ENCODE measurements at regions of chr16 and their contacts with region 1.

Region 1: GRCh38 chr16:56988948-56989945 is at the start of gene NLRC5:
- DNase-seq: peak; percentile 72 to 93 (median 88)
- ATAC-seq: peak; percentile 95
- H3K4me3 ChIP-seq: peak within 1 kb of the TSS; percentile 73
- H3K4me3 Mint-ChIP-seq: peak within 1 kb of the TSS; percentile 93 to 100 (median 98)
- H3K27ac ChIP-seq: peak within 1 kb of the TSS; percentile 98
- H3K27ac Mint-ChIP-seq: peak within 1 kb of the TSS; percentile 85 to 99 (median 97)
- H3K4me1 ChIP-seq: peaks cover 24 to 51% of the 10 kb centered on the region in 2 donors
- H3K4me1 Mint-ChIP-seq: peaks cover 65 to 87% (median 73%) of the 10 kb centered on the region in 7 donors
- H3K27me3 ChIP-seq: no peaks in the 10 kb centered on the region
- H3K27me3 Mint-ChIP-seq: no peaks in the 10 kb centered on the region
- total RNA-seq, gene NLRC5: 380 to 615 (median 394) TPM

Region 2: DNA sequence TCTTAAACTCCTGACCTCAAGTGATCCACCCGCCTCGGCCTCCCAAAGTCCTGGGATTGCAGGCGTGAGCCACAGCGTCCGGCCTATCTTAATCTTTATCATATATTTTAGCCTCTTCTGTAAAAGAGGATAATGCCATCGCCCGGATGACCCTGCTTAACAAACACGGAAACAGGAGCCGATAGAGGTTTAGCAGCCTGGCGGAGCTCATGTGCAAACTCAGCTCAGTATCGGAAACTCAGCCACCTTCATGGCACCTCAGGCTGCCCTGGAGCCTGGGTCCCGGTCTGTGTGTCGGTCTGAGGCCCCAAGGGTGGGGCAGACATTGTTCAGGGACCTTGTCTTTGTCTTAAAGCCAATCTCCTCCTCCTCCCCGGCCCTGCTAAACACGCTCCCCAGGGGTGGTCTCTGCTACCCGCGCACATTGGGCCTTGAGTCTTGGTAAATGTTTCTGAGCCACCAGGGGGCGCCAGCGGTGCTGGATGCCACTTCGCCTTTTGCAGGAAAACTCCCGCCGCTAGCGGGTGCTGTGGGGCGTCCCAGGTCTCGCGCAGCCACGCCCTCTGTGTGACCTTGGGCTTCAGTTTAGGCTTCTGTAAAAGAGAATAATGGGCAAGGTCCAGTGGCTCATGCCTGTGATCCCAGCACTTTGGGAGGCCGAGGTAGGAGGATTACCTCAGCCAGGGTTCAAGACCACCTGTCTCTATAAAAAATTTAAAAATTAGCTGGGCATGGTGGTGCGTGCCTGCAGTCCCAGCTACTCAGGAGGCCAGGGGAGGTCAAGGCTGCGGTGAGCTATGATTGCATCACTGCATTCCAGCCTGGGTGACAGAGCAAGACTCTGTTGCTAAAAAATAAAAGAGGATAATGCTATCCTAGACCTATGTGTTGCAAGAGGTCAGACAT is 24.8 kb before region 1 on chr16:
- CTCF ChIA-PET with region 1: interaction called, 8 read pairs
- POLR2A ChIA-PET with region 1: interaction called, 27 read pairs
- intact Hi-C with region 1: loop called (anchors 1 kb)
- DNase-seq: peak; percentile 84 to 96 (median 91)
- ATAC-seq: peak; percentile 99
- H3K4me3 ChIP-seq: no peak overlapping the region
- H3K4me3 Mint-ChIP-seq: peak overlapping the region in 4 of 10 donors; percentile 6 to 62 (median 38)
- H3K27ac ChIP-seq: no peak overlapping the region
- H3K27ac Mint-ChIP-seq: peak overlapping the region in 8 of 9 donors; percentile 60 to 91 (median 82)
- H3K4me1 ChIP-seq: peaks cover 7 to 19% of the 10 kb centered on the region in 2 donors
- H3K4me1 Mint-ChIP-seq: peaks cover 21 to 27% (median 23%) of the 10 kb centered on the region in 7 donors
- H3K27me3 ChIP-seq: no peaks in the 10 kb centered on the region
- H3K27me3 Mint-ChIP-seq: peaks cover 0 to 4% (median 0%) of the 10 kb centered on the region in 5 donors

Region 3: GRCh38 chr16:56977216-56977615 is 12.0 kb before region 1 on chr16:
- CTCF ChIA-PET with region 1: interaction called, 5 read pairs
- POLR2A ChIA-PET with region 1: interaction called, 88 read pairs
- intact Hi-C with region 1: no loop called
- DNase-seq: no peak
- ATAC-seq: no peak
- H3K4me3 ChIP-seq: no peak overlapping the region
- H3K4me3 Mint-ChIP-seq: peak overlapping the region in 1 of 10 donors; percentile 42
- H3K27ac ChIP-seq: no peak overlapping the region
- H3K27ac Mint-ChIP-seq: peak overlapping the region in 4 of 9 donors; percentile 15 to 86 (median 74)
- H3K4me1 ChIP-seq: peaks cover 14 to 16% of the 10 kb centered on the region in 2 donors
- H3K4me1 Mint-ChIP-seq: peaks cover 32 to 66% (median 59%) of the 10 kb centered on the region in 7 donors
- H3K27me3 ChIP-seq: no peaks in the 10 kb centered on the region
- H3K27me3 Mint-ChIP-seq: no peaks in the 10 kb centered on the region

Region 4: DNA sequence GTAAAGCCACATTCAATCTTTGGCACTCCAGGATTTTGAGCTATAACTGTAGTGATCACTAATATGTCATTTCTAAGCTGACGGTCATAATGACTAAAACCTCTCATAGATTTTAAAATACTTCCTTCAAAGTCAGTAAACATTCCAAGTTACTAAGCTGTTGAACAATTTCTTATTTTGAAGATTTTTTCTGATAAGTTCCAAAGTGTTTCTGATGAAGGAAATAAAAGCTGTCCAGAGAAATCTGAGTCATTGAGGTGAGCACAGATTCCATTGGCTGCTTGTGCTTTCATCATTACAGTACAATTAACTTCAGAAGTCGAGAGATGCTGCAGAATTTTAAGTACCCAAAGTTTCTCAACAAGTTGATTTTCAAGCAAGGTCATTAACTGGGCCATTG is 24.0 kb after region 1 on chr16:
- CTCF ChIA-PET with region 1: interaction called, 3 read pairs
- POLR2A ChIA-PET with region 1: interaction called, 182 read pairs
- intact Hi-C with region 1: loop called (anchors 1 kb)
- DNase-seq: no peak
- ATAC-seq: no peak
- H3K4me3 ChIP-seq: peak overlapping the region; percentile 24
- H3K4me3 Mint-ChIP-seq: peak overlapping the region in 9 of 10 donors; percentile 36 to 87 (median 72)
- H3K27ac ChIP-seq: peak overlapping the region; percentile 80
- H3K27ac Mint-ChIP-seq: peak overlapping the region; percentile 88 to 98 (median 94)
- H3K4me1 ChIP-seq: peaks cover 81 to 83% of the 10 kb centered on the region in 2 donors
- H3K4me1 Mint-ChIP-seq: peaks cover 53 to 94% (median 82%) of the 10 kb centered on the region in 7 donors
- H3K27me3 ChIP-seq: no peaks in the 10 kb centered on the region
- H3K27me3 Mint-ChIP-seq: no peaks in the 10 kb centered on the region

Region 5: DNA sequence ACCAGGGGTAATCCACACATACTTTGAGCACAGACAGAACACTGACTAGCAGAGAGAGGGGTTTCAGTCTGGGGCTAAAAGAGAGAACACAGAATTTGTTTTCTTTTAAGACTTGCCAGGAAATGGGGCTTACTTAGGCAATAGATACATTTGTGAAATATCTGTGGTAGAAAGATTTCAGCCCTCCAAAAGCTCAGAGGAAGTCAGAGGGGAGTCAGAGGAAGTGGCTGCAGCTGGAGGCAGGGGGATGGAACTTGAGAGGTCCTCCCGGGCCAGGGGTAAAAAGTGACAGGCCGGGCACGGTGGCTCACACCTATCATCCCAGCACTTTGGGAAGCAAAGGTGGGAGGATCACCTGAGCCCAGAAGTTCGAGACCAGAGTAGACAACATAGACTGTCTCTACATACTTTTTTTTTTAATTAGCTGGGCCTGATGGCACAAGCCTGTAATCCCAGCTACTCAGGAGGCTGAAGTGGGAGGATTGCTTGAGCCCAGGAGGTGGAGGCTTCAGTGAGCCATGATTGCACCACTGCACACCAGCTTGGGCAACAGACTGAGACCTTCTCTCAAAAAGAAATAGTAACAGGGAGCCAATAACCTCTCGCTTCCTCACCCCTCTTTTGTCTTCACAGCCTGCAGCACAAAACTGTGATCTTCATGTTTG is 50.0 kb after region 1 on chr16:
- CTCF ChIA-PET with region 1: interaction called, 9 read pairs
- POLR2A ChIA-PET with region 1: interaction called, 82 read pairs
- intact Hi-C with region 1: loop called (anchors 1 kb)
- DNase-seq: peak in 7 of 9 donors; percentile 27 to 50 (median 37)
- ATAC-seq: peak; percentile 24
- H3K4me3 ChIP-seq: peak overlapping the region; percentile 45
- H3K4me3 Mint-ChIP-seq: peak overlapping the region; percentile 55 to 95 (median 76)
- H3K27ac ChIP-seq: peak overlapping the region; percentile 72
- H3K27ac Mint-ChIP-seq: peak overlapping the region; percentile 88 to 99 (median 93)
- H3K4me1 ChIP-seq: peaks cover 82 to 94% of the 10 kb centered on the region in 2 donors
- H3K4me1 Mint-ChIP-seq: peaks cover 66 to 99% (median 86%) of the 10 kb centered on the region in 7 donors
- H3K27me3 ChIP-seq: no peaks in the 10 kb centered on the region
- H3K27me3 Mint-ChIP-seq: no peaks in the 10 kb centered on the region